BJ (cell line): ENCODE measurements at regions of chr5 and their contacts with region 1.

Region 1: DNA sequence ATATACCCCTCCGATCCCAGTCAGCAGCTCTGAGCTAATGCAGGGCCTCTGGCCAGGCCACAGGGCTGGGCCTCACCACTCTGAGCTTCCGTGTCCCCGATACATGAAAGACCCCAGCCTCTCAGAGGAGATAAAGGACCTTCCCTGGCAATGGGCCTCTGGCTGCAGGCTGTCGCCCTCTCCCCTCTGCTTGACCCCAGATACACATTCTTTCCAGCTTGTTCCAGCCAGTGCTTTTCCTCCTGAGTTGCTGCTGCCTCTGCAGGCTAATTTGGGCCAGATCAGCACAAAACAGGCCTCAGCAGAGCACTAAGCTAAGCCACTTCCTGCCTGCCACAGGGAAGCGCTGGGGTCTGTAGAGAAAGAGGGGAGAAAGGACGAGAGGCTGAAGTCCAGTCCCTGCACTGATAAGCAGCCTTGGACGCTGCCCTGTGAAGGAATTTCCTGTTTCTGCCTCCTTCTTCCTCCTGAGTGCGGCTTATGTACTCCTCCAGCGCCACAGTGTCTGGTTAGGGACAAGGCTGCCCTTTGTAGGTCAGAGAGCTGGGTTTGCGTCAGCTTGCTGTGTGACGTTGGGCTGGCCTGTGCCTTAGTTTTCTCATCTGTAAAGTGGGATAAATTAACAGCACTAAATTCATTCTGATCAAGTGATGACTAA is 73.0 kb upstream of the IL17B start:
- DNase-seq: no peak
- H3K4me3 ChIP-seq: no peak overlapping the region
- H3K27me3 ChIP-seq: no peaks in the 10 kb centered on the region
- CTCF ChIP-seq: no peak

Region 2: GRCh38 chr5:149466457-149466972 is 14.4 kb after region 1 on chr5:
- CTCF ChIA-PET with region 1: interaction called, 10 read pairs
- POLR2A ChIA-PET with region 1: no interaction called
- DNase-seq: no peak
- H3K4me3 ChIP-seq: no peak overlapping the region
- H3K27me3 ChIP-seq: no peaks in the 10 kb centered on the region
- CTCF ChIP-seq: no peak

Region 3: GRCh38 chr5:150272526-150272925 is 820.4 kb after region 1 on chr5:
- CTCF ChIA-PET with region 1: no interaction called
- POLR2A ChIA-PET with region 1: interaction called, 11 read pairs
- DNase-seq: no peak
- H3K4me3 ChIP-seq: no peak overlapping the region
- H3K27me3 ChIP-seq: no peaks in the 10 kb centered on the region; the same call in 1 of the 2 replicates
- CTCF ChIP-seq: peak; percentile 60